Activated T-helper 1 cell treated with anti-CD3 and anti-CD28 coated beads, Interleukin-12 subunit alpha, Interleukin-12 subunit beta, Interleukin-2, Interleukin-4 antibody, amounts not matched to agents 30 ng/mL and 10 ng/mL and 1 ng/mL, durations not matched to agents 14 hours and 24 hours and 36 hours (primary cell): ENCODE measurements at regions of chr17 and their contacts with region 1.

Region 1: DNA sequence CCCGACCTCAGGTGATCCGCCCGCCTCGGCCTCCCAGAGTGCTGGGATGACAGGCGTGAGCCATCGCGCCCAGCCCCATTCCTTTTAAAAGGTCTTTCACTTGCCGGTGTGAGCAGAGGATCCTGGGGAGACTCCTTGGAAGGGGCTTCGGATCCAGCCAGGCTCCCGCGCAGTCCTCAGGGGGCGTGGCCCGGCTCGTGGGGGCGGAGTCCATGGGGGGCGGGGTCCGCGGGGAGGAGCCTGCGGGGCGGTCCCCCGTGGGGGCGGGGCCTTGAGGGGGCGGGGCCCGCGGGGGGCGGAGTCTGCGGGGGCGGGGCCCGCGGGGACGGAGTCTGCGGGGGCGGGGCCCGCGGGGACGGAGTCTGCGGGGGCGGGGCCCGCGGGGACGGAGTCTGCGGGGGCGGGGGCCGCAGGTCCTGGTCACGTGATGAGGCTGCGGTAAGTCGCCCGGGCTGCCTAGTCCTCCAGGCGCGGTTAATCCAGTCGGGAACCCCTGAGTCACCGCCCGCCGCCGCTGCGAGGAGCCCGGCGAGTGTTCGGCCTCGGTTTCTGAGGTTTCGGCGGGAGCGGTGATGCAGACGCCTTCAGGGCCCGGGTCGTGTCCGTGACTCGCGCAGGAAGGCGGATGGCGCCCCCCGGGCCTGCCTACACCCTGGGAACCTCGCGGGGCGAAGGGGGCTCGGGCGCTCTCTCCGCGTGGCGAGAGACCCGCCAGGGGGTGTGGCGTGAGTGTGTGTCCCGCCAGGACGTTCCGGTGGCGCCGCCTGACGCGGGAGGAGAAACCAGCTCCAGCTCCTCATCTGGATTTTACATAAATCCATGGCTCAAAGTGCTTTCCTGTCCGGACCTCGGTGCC is 23.6 kb upstream of the ABR start:
- DNase-seq: no peak
- H3K4me3 Mint-ChIP-seq: no peak overlapping the region
- H3K27ac Mint-ChIP-seq: peak overlapping the region; percentile 34
- H3K4me1 Mint-ChIP-seq: peaks cover 24% of the 10 kb centered on the region
- H3K27me3 Mint-ChIP-seq: peaks cover 3% of the 10 kb centered on the region

Region 2: GRCh38 chr17:1108861-1109605 is 94.3 kb before region 1 on chr17:
- intact Hi-C with region 1: no loop called
- DNase-seq: peak; percentile 64
- H3K4me3 Mint-ChIP-seq: peak overlapping the region; percentile 85
- H3K27ac Mint-ChIP-seq: peak overlapping the region; percentile 71
- H3K4me1 Mint-ChIP-seq: peaks cover 40% of the 10 kb centered on the region
- H3K27me3 Mint-ChIP-seq: no peaks in the 10 kb centered on the region

Region 3: DNA sequence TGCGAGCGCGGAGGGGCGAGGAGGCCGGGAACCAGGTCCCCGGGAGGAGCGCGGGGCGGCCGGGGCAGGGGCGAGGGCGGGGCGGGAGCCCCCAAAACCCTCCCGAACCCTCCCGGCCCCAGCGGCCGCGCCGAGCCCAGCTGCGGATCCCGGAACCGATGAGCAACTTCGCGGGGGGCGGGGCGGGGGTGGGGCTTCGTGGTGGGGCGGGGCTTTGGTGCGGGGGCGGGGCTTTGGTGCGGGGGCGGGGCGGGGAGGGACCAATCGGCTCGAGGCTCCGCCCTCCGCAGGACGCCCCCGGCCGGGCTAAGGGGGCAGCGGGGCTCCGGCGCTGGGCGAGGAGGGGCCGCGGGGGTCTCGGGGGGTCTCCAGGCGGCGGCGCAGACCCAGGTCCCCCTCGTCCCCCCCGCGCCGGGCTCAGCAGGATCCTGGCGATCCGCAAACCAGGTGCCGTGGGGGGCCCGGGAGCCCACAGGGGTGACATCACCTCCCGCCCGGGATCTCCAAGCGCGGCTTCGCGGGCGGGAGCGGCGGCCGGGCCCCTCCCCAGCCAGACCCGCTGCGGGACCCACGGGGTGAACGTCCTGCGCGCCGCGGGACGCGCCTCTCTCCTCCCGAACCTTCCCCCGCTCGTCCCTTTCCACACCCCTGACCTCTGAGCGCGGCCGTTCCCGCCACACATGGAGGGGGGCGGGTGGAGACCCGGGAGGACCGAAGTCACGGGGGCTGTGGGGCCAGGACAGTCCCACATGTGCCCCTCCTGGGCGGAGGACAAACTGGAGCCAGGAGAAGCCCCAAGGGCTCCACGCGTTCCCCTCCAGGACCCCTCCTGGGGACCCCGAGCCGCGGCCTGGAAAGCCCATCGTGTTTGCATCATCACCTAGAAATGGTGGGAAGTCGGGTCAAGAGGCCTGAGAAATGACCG is 23.3 kb before region 1 on chr17 and contains the start of gene ABR:
- intact Hi-C with region 1: loop called (anchors 2 kb)
- DNase-seq: peak; percentile 37
- H3K4me3 Mint-ChIP-seq: peak within 1 kb of the TSS; percentile 72
- H3K27ac Mint-ChIP-seq: no peak within 1 kb of the TSS
- H3K4me1 Mint-ChIP-seq: no peaks in the 10 kb centered on the region
- H3K27me3 Mint-ChIP-seq: peaks cover 16% of the 10 kb centered on the region
- total RNA-seq, gene ABR: 58.4 and 66.7 TPM in 2 replicates